PC-9 (cell line): ENCODE measurements at regions of chr1 and their contacts with region 1.

Region 1: GRCh38 chr1:155001675-155002463 is 733 bp upstream of the ZBTB7B start:
- DNase-seq: peak; percentile 96 to 99
- H3K4me3 ChIP-seq: peak overlapping the region; percentile 80
- H3K27ac ChIP-seq: peak overlapping the region; percentile 72
- H3K4me1 ChIP-seq: peaks cover 20% of the 10 kb centered on the region
- H3K27me3 ChIP-seq: no peaks in the 10 kb centered on the region
- CTCF ChIP-seq: peak; percentile 68; the same call in 1 of the 2 replicates

Region 2: DNA sequence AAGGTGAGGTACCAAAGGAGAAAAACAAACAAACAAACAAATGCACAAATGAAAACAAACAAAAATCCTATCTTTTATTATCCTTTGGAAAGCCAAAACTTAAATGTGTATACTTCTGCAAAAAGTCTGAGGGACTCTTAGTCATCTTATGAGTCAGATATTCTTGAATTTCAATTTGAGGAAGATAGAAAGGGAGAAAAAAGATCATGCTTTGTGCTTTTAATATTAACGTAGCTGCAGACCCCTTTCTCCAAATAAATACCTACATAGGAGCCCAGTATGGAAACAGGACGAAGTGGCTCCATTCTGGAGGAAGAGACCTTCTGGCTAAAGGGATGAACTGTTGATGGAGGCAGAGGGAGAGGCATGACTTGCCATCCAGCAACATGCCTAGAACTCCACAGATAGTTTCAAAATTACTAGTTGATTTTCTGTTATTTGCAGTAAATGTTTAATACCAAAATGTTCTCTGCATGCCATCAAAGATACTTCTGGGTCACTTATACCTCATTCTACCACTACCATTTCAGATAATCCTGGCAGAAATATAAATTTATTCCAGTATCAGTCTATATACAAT is 872.4 kb before region 1 on chr1:
- CTCF ChIA-PET with region 1: no interaction called
- POLR2A ChIA-PET with region 1: no interaction called
- intact Hi-C with region 1: no loop called
- DNase-seq: no peak
- H3K4me3 ChIP-seq: no peak overlapping the region
- H3K27ac ChIP-seq: no peak overlapping the region
- H3K4me1 ChIP-seq: no peaks in the 10 kb centered on the region
- H3K27me3 ChIP-seq: no peaks in the 10 kb centered on the region
- CTCF ChIP-seq: no peak

Region 3: GRCh38 chr1:154961497-154962262 is 40.2 kb before region 1 on chr1 and contains the start of gene PYGO2:
- CTCF ChIA-PET with region 1: no interaction called
- POLR2A ChIA-PET with region 1: interaction called, 3 read pairs
- intact Hi-C with region 1: loop called (anchors 5 kb)
- DNase-seq: peak; percentile 64 to 88
- H3K4me3 ChIP-seq: peak within 1 kb of the TSS; percentile 78
- H3K27ac ChIP-seq: peak within 1 kb of the TSS; percentile 72
- H3K4me1 ChIP-seq: peaks cover 18% of the 10 kb centered on the region
- H3K27me3 ChIP-seq: no peaks in the 10 kb centered on the region
- CTCF ChIP-seq: peak; percentile 60; the same call in 1 of the 2 replicates
- total RNA-seq, gene PYGO2: 30.0 and 33.2 TPM in 2 replicates

Region 4: DNA sequence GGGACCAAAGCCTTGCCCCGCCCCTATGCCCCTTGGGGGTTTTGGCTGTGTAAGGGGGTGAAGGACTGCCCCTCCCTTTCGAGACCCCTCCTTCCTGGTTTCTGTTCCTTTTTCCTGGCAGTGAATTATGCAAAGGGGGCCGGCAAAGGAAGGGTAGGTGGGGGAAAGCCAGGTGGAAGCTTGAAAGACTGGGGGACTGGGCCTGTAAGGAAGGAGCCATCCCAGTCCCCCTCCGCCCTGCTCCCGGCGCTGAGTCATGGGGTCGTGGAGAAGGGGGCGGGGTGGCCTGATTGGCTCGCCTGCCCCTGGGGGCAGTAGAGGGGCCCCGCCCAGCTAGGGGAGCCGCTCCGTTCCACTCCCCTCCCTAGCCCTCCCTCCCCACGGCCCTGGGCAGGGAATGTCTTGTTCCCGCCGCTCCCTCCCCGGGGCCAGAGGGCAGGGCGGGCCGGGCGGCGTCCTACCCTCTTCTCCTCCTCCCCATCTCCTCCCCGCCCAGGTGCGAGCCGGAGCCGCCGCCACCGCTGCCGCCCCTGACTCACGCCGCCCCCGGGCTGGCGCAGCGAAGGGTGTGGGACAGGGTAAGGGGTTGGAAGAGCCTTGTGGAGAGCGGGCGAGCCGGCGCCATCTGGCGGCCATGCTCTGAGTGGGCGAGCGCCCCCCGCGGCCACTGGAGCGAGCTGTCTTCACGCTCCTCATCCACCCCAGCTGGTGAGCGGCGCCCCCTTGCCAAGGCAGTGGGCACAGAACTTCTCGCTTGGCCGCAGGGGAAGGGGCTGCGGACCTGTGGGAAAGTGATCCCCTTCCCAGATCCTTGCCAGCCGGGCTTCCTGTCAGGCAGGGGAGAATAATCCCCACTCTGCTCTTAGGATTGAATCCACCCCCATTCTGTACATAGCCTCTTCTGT is 15.4 kb after region 1 on chr1:
- CTCF ChIA-PET with region 1: interaction called, 7 read pairs
- POLR2A ChIA-PET with region 1: interaction called, 6 read pairs
- intact Hi-C with region 1: loop called (anchors 1 kb)
- DNase-seq: peak; percentile 91 to 99
- H3K4me3 ChIP-seq: peak overlapping the region; percentile 37; the same call in 1 of the 2 replicates
- H3K27ac ChIP-seq: peak overlapping the region; percentile 53
- H3K4me1 ChIP-seq: peaks cover 36% of the 10 kb centered on the region
- H3K27me3 ChIP-seq: no peaks in the 10 kb centered on the region
- CTCF ChIP-seq: peak; percentile 93

Region 5: DNA sequence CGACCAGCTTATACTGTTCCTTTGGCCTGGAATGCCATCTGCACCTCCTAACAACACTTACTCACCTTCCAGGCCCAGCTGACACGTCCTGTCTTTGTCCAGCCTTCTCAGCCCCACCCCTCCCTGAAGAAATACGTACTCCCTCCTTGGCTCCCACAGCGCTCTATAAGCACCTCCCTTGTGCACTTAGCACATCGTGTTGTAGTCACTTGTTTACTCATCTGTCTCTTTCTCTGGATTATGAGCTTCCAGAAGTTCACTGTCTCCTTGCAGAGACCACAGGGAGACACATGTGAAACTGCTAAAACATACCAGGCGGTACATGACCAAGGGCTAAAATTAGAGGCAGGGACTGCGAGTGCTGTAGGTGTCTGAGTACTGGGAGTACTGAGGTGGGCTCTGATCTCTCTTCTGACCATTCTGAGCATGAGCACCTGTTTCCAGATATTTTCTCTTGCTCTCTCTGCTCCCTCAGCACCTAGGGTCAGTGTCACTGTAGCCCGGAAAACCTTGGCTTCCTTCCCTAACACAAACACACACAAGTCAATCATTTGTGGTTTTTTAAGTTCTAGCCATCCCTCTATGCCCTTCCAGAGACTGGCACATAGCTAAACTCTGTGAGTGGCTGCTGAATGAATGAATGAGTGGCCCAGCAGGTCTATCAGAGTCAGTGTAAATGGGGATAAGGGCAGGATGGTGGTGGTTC is 36.9 kb after region 1 on chr1:
- CTCF ChIA-PET with region 1: no interaction called
- POLR2A ChIA-PET with region 1: interaction called, 22 read pairs
- intact Hi-C with region 1: no loop called
- DNase-seq: peak; percentile 71 to 86
- H3K4me3 ChIP-seq: peak overlapping the region; percentile 11; the same call in 1 of the 2 replicates
- H3K27ac ChIP-seq: peak overlapping the region; percentile 53
- H3K4me1 ChIP-seq: peaks cover 28% of the 10 kb centered on the region
- H3K27me3 ChIP-seq: no peaks in the 10 kb centered on the region
- CTCF ChIP-seq: no peak

Region 6: DNA sequence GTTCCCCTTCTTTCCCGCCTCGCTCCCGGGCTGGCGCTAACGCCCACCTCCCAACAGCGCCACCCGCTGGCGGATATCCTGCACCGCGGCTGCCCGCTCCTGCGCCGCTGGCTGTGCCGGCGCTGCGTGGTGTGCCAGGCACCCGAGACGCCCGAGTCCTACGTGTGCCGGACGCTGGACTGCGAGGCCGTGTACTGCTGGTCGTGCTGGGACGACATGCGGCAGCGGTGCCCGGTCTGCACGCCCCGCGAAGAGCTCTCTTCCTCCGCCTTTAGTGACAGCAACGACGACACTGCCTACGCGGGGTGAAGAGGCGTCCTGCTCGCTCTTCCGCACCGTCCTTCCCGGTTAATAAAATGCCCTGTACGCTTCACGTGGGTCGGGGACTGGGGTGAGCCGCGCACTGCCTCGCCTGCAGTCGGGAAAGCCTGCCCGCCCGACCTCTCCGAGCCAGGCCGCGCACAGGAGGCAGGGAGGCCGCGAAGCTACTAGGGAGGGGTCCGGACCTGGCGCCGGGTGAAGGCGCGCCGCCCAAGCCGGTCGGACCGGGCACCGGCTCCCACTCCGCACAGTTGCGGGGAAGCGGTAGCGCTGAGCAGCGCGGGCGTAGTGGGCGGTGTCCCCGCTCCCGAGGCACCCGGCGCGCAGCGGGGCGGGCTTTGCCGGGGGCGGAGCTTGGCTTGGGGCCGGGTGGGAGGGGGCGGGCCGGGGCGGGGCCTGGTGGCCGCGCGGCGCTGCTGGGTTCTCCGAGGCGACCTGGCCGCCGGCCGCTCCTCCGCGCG is 48.9 kb after region 1 on chr1 and contains the start of gene ADAM15:
- CTCF ChIA-PET with region 1: interaction called, 10 read pairs
- POLR2A ChIA-PET with region 1: interaction called, 7 read pairs
- intact Hi-C with region 1: loop called (anchors 1 kb)
- DNase-seq: peak; percentile 64 to 88
- H3K4me3 ChIP-seq: peak within 1 kb of the TSS; percentile 73
- H3K27ac ChIP-seq: peak within 1 kb of the TSS; percentile 67
- H3K4me1 ChIP-seq: peaks cover 34% of the 10 kb centered on the region
- H3K27me3 ChIP-seq: no peaks in the 10 kb centered on the region
- CTCF ChIP-seq: peak; percentile 89
- total RNA-seq, gene ADAM15: 187 and 195 TPM in 2 replicates

Region 7: GRCh38 chr1:155069551-155070157 is 67.8 kb after region 1 on chr1:
- CTCF ChIA-PET with region 1: no interaction called
- POLR2A ChIA-PET with region 1: no interaction called
- intact Hi-C with region 1: no loop called
- DNase-seq: no peak
- H3K4me3 ChIP-seq: no peak overlapping the region
- H3K27ac ChIP-seq: no peak overlapping the region
- H3K4me1 ChIP-seq: peaks cover 10% of the 10 kb centered on the region
- H3K27me3 ChIP-seq: no peaks in the 10 kb centered on the region
- CTCF ChIP-seq: no peak

Region 8: GRCh38 chr1:155117617-155118016 is 115.7 kb after region 1 on chr1:
- CTCF ChIA-PET with region 1: no interaction called
- POLR2A ChIA-PET with region 1: no interaction called
- intact Hi-C with region 1: no loop called
- DNase-seq: peak in 1 of 2 experiments; percentile 51
- H3K4me3 ChIP-seq: no peak overlapping the region
- H3K27ac ChIP-seq: no peak overlapping the region
- H3K4me1 ChIP-seq: no peaks in the 10 kb centered on the region
- H3K27me3 ChIP-seq: no peaks in the 10 kb centered on the region
- CTCF ChIP-seq: no peak